Gastrocnemius medialis (tissue), 4 donors: ENCODE measurements at regions of chr2 and their contacts with region 1.

Region 1: GRCh38 chr2:24399434-24400206 is 39.3 kb upstream of the ITSN2 start:
- DNase-seq: no peak
- ATAC-seq: no peak
- H3K4me3 ChIP-seq: no peak overlapping the region
- H3K27ac ChIP-seq: no peak overlapping the region
- H3K4me1 ChIP-seq: peaks cover 0 to 7% of the 10 kb centered on the region in 2 donors
- H3K27me3 ChIP-seq: peaks cover 0 to 10% (median 5%) of the 10 kb centered on the region in 3 donors
- CTCF ChIP-seq: no peak
- POLR2A ChIP-seq: no peak

Region 2: GRCh38 chr2:24231461-24231881 is 168.1 kb before region 1 on chr2:
- in situ Hi-C with region 1: loop called in 1 of 4 experiments (anchors 10 kb)
- intact Hi-C with region 1: no loop called
- DNase-seq: no peak
- ATAC-seq: no peak
- H3K4me3 ChIP-seq: no peak overlapping the region
- H3K27ac ChIP-seq: no peak overlapping the region
- H3K4me1 ChIP-seq: no peaks in the 10 kb centered on the region
- H3K27me3 ChIP-seq: no peaks in the 10 kb centered on the region
- CTCF ChIP-seq: no peak
- POLR2A ChIP-seq: no peak

Region 3: GRCh38 chr2:24375349-24376087 is 24.1 kb before region 1 on chr2:
- in situ Hi-C with region 1: no loop called
- intact Hi-C with region 1: no loop called
- DNase-seq: peak; percentile 26 to 36
- ATAC-seq: peak; percentile 80 to 96
- H3K4me3 ChIP-seq: no peak overlapping the region
- H3K27ac ChIP-seq: peak overlapping the region in 1 of 4 donors; percentile 29
- H3K4me1 ChIP-seq: no peaks in the 10 kb centered on the region
- H3K27me3 ChIP-seq: no peaks in the 10 kb centered on the region
- CTCF ChIP-seq: no peak
- POLR2A ChIP-seq: no peak